ENCODE measurements at regions of chr3 and their contacts with region 1.

Region 1: GRCh38 chr3:141231101-141231935 is at the start of gene PXYLP1:
- DNase-seq: peak; percentile 83 to 97 (median 91)
- ATAC-seq: peak; percentile 98
- H3K4me3 ChIP-seq: peak within 1 kb of the TSS; percentile 72
- H3K4me3 Mint-ChIP-seq: peak within 1 kb of the TSS; percentile 85 to 94 (median 92)
- H3K27ac ChIP-seq: peak within 1 kb of the TSS; percentile 85
- H3K27ac Mint-ChIP-seq: peak within 1 kb of the TSS; percentile 91 to 98 (median 98)
- H3K4me1 ChIP-seq: peaks cover 6 to 33% of the 10 kb centered on the region in 2 donors
- H3K4me1 Mint-ChIP-seq: peaks cover 50 to 66% (median 54%) of the 10 kb centered on the region in 7 donors
- H3K27me3 ChIP-seq: no peaks in the 10 kb centered on the region
- H3K27me3 Mint-ChIP-seq: peaks cover 0 to 6% (median 0%) of the 10 kb centered on the region in 5 donors
- total RNA-seq, gene PXYLP1: 18.6 to 40.9 (median 23.2) TPM

Region 2: GRCh38 chr3:141192345-141192744 is 39.0 kb before region 1 on chr3:
- CTCF ChIA-PET with region 1: interaction called, 5 read pairs
- POLR2A ChIA-PET with region 1: interaction called, 4 read pairs
- intact Hi-C with region 1: loop called in 1 of 2 experiments (anchors 1 kb)
- DNase-seq: peak; percentile 88 to 99 (median 95)
- ATAC-seq: peak; percentile 100
- H3K4me3 ChIP-seq: no peak overlapping the region
- H3K4me3 Mint-ChIP-seq: peak overlapping the region in 3 of 10 donors; percentile 5 to 14 (median 5)
- H3K27ac ChIP-seq: no peak overlapping the region
- H3K27ac Mint-ChIP-seq: peak overlapping the region in 6 of 9 donors; percentile 4 to 75 (median 16)
- H3K4me1 ChIP-seq: no peaks in the 10 kb centered on the region
- H3K4me1 Mint-ChIP-seq: peaks cover 0 to 15% (median 13%) of the 10 kb centered on the region in 7 donors
- H3K27me3 ChIP-seq: peaks cover 0 to 5% of the 10 kb centered on the region in 2 donors
- H3K27me3 Mint-ChIP-seq: peaks cover 0 to 23% (median 6%) of the 10 kb centered on the region in 5 donors

Region 3: DNA sequence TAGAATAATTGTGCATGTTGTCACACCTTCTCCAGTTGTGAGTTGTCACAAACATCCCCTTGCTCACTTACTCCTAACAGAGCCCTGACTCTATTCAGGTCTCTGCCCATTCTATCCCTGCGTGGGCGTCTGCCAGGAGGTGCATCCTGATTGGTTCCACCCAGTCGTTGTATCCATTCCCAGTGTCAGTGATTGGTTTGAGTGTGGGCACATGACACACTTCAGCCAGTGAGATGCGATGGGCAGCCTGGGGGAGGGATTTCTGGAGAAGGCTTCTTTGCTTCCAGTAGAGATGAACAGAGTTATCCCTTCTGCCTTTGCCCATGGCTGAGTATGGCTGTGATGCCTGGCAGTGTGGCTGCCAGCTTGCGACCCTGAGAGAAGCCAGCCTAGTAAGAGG is 19.0 kb after region 1 on chr3:
- CTCF ChIA-PET with region 1: interaction called, 82 read pairs
- POLR2A ChIA-PET with region 1: interaction called, 60 read pairs
- intact Hi-C with region 1: no loop called
- DNase-seq: no peak
- ATAC-seq: no peak
- H3K4me3 ChIP-seq: no peak overlapping the region
- H3K4me3 Mint-ChIP-seq: no peak overlapping the region
- H3K27ac ChIP-seq: no peak overlapping the region
- H3K27ac Mint-ChIP-seq: peak overlapping the region in 1 of 9 donors; percentile 68
- H3K4me1 ChIP-seq: peaks cover 0 to 8% of the 10 kb centered on the region in 2 donors
- H3K4me1 Mint-ChIP-seq: peaks cover 5 to 76% (median 31%) of the 10 kb centered on the region in 7 donors
- H3K27me3 ChIP-seq: no peaks in the 10 kb centered on the region
- H3K27me3 Mint-ChIP-seq: no peaks in the 10 kb centered on the region

Region 4: DNA sequence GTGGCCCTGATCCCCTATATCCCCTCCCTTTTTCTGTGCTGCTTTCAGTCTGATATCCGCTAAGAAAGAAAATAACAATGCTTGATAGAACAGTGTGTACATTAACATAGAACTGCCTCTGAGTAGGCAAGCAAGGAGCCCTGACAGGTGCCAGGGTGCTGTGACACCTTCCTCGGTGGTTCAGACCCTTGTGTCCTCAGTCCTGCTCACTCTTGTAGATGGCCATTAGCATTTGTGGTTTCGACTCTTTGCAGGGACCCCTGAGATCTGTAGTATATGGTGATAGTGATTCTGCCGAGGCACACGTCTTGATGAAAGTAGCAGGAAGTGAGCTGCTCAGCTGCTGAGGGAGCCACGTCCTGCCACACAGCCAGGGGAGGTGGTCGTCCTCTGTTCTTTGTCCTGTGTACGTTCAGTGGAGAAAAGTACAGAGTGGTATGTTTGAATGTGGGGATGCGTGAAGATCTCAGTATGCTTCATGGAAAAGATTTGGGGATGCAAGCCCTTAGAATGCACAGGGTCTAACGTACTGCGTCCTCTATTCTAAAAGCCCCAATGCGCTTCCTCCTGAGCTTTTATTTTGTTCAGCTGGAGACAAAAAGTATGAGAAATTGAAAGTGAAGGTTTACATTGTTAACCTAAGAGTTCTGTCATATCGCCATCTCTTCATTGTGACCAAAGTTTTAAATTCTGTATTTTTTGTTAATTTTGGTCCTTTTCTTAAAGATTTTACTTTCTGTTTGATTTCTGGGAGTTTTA is 35.7 kb after region 1 on chr3:
- CTCF ChIA-PET with region 1: interaction called, 61 read pairs
- POLR2A ChIA-PET with region 1: interaction called, 516 read pairs
- intact Hi-C with region 1: loop called (anchors 1 kb)
- DNase-seq: peak in 8 of 9 donors; percentile 20 to 82 (median 72)
- ATAC-seq: peak; percentile 85
- H3K4me3 ChIP-seq: peak overlapping the region; percentile 73
- H3K4me3 Mint-ChIP-seq: peak overlapping the region; percentile 84 to 92 (median 88)
- H3K27ac ChIP-seq: peak overlapping the region; percentile 77
- H3K27ac Mint-ChIP-seq: peak overlapping the region; percentile 91 to 99 (median 96)
- H3K4me1 ChIP-seq: peaks cover 0 to 35% of the 10 kb centered on the region in 2 donors
- H3K4me1 Mint-ChIP-seq: peaks cover 32 to 87% (median 39%) of the 10 kb centered on the region in 7 donors
- H3K27me3 ChIP-seq: no peaks in the 10 kb centered on the region
- H3K27me3 Mint-ChIP-seq: no peaks in the 10 kb centered on the region

Region 5: GRCh38 chr3:141303481-141304223 is 72.3 kb after region 1 on chr3:
- CTCF ChIA-PET with region 1: interaction called, 76 read pairs
- POLR2A ChIA-PET with region 1: interaction called, 58 read pairs
- intact Hi-C with region 1: loop called in 1 of 2 experiments (anchors 2 kb)
- DNase-seq: peak in 7 of 9 donors; percentile 62 to 84 (median 77)
- ATAC-seq: peak; percentile 77
- H3K4me3 ChIP-seq: no peak overlapping the region
- H3K4me3 Mint-ChIP-seq: peak overlapping the region in 1 of 10 donors; percentile 3
- H3K27ac ChIP-seq: no peak overlapping the region
- H3K27ac Mint-ChIP-seq: peak overlapping the region in 5 of 9 donors; percentile 4 to 84 (median 50)
- H3K4me1 ChIP-seq: peaks cover 20 to 57% of the 10 kb centered on the region in 2 donors
- H3K4me1 Mint-ChIP-seq: peaks cover 30 to 90% (median 80%) of the 10 kb centered on the region in 7 donors
- H3K27me3 ChIP-seq: no peaks in the 10 kb centered on the region
- H3K27me3 Mint-ChIP-seq: peaks cover 0 to 5% (median 0%) of the 10 kb centered on the region in 5 donors

Region 6: GRCh38 chr3:141452036-141452435 is 220.7 kb after region 1 on chr3:
- CTCF ChIA-PET with region 1: interaction called, 5 read pairs
- POLR2A ChIA-PET with region 1: interaction called, 10 read pairs
- intact Hi-C with region 1: loop called (anchors 1 kb)
- DNase-seq: peak in 7 of 9 donors; percentile 45 to 78 (median 64)
- ATAC-seq: peak; percentile 90
- H3K4me3 ChIP-seq: no peak overlapping the region
- H3K4me3 Mint-ChIP-seq: no peak overlapping the region
- H3K27ac ChIP-seq: peak overlapping the region; percentile 10
- H3K27ac Mint-ChIP-seq: no peak overlapping the region
- H3K4me1 ChIP-seq: peaks cover 0 to 10% of the 10 kb centered on the region in 2 donors
- H3K4me1 Mint-ChIP-seq: peaks cover 6 to 20% (median 12%) of the 10 kb centered on the region in 7 donors
- H3K27me3 ChIP-seq: no peaks in the 10 kb centered on the region
- H3K27me3 Mint-ChIP-seq: no peaks in the 10 kb centered on the region

Region 7: DNA sequence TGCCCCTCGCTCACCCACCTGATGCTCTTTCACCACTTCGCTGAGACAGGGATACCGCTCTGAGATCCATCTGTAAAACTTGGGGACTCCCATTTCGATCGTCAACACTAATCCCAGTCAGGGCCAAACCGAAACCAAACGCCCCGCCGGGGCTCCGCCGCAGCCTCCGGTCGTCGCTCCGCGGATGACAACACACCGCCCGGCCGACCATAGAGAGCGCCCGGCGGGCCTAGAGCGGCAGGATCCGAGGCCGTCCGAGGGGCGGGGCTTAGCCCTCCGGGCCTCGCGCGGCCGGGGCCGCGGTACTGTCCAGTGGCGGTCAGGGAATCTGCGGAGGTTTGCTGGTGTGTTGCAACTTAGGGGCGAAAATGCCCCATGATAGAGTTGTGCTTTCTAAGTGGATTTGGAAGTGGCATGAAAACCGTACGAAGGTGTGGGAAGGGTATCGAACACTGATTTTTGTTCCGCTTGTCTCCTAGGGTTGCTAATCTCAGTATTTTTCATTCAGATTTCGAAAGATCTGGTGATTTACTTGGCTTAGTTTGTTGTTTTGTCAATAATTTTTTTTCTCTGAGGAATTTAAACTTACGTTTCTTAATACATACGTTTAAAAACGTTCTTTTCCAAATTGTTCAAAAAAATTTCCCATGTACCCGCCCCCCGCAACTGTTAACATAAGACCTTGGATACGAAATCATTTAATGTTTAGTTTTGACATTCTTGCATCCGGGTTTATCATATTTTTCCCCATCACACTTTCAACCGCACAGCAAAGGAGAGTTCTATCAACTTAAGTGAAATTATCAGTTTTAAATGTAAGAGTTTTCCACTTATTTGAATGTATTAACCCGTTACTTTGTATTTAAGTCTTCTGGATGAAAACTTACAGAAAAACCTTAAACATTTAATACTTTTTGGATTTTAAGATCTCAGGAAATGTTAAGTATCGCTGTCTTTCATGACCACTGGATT is 1216.8 kb after region 1 on chr3 and contains the start of gene XRN1:
- CTCF ChIA-PET with region 1: no interaction called
- POLR2A ChIA-PET with region 1: no interaction called
- intact Hi-C with region 1: loop called in 1 of 2 experiments (anchors 5 kb)
- DNase-seq: peak; percentile 90 to 97 (median 94)
- ATAC-seq: peak; percentile 99
- H3K4me3 ChIP-seq: peak within 1 kb of the TSS; percentile 78
- H3K4me3 Mint-ChIP-seq: peak within 1 kb of the TSS; percentile 89 to 100 (median 98)
- H3K27ac ChIP-seq: peak within 1 kb of the TSS; percentile 99
- H3K27ac Mint-ChIP-seq: peak within 1 kb of the TSS; percentile 98 to 100 (median 99)
- H3K4me1 ChIP-seq: peaks cover 31% of the 10 kb centered on the region in 2 donors
- H3K4me1 Mint-ChIP-seq: peaks cover 26 to 55% (median 51%) of the 10 kb centered on the region in 7 donors
- H3K27me3 ChIP-seq: no peaks in the 10 kb centered on the region
- H3K27me3 Mint-ChIP-seq: no peaks in the 10 kb centered on the region
- total RNA-seq, gene XRN1: 86.1 to 123 (median 103) TPM

Measured in naive thymus-derived CD4-positive, alpha-beta T cell (primary cell).